Transverse colon (tissue), 4 donors: ENCODE measurements at regions of chr1 and their contacts with region 1.

Region 1: DNA sequence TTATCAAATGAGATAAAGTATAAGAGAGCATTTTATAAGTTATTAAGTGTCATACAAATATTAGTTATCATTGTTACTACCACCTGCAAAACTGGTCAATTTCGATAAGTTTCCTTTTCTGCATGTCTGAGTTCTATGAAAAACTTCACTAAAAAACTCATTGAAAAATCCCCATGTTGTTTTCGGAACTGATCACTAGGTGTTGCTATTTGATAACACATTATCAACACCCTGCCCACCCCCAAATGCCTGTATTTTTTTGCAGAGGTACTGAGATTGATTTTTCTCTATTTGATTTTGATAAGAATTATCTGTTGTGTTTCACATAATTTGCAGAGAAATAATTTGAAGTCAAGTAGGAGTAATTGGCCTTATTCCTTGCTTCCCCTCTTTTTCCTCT is 22.1 kb upstream of the DISP1 start:
- DNase-seq: no peak
- H3K4me3 ChIP-seq: no peak overlapping the region
- H3K27ac ChIP-seq: no peak overlapping the region
- H3K4me1 ChIP-seq: no peaks in the 10 kb centered on the region
- H3K27me3 ChIP-seq: no peaks in the 10 kb centered on the region
- CTCF ChIP-seq: peak; percentile 45 to 56 (median 52)
- EP300 ChIP-seq: no peak
- POLR2A ChIP-seq: no peak

Region 2: DNA sequence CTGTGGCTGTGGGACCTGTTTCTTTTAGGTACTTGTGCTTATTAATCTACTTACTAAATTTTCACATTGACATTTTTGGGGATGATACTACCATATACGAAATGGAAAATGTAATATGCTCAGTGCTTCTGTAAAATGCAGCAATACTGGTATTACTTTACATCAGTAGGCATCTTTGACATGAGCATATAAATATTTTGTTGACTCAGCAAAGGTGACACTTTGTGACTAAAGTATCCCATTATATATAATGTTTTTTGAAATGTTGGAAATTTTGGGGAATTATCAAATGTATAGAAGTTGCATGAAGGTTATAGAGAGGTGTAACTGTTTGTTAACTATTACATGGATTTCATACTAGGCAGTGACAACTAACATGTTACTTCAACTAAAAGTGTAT is 58.0 kb before region 1 on chr1:
- in situ Hi-C with region 1: no loop called
- intact Hi-C with region 1: loop called (anchors 1 kb)
- DNase-seq: no peak
- H3K4me3 ChIP-seq: no peak overlapping the region
- H3K27ac ChIP-seq: no peak overlapping the region
- H3K4me1 ChIP-seq: peaks cover 0 to 8% (median 2%) of the 10 kb centered on the region in 4 donors
- H3K27me3 ChIP-seq: no peaks in the 10 kb centered on the region
- CTCF ChIP-seq: no peak
- EP300 ChIP-seq: no peak
- POLR2A ChIP-seq: no peak

Region 3: DNA sequence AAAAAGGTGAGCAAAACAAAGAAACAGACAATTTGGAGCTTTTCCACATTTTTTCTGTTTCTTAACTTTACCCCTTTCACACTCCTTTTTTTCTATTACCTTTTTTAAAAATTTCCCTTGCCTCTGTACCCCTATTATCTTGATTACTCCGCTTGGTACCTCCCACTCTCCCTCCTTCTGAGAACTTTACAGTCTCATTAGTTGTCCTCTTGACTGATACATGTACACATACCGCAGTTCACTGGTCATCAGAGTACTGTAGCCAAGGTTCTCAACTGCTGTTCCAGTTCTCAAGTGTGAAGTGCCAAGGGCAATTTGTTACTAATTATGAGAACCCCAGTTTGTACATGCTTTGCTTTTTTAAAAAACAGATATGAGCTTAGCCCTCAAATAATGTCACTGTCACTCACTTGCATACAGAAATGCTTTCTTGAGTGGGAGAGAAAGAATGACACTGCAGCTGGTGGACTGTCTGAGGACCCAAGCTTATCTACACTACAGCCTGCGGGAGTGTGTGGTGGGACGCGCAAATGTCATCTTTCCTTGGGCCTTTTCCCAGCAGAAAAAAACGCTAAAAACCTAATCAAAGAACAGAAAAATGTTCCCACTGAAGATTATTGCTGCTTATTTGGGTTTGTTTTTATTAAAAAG is 182.9 kb after region 1 on chr1:
- in situ Hi-C with region 1: no loop called
- intact Hi-C with region 1: no loop called
- DNase-seq: no peak
- H3K4me3 ChIP-seq: no peak overlapping the region
- H3K27ac ChIP-seq: peak overlapping the region; percentile 36 to 67 (median 62)
- H3K4me1 ChIP-seq: peaks cover 0 to 13% (median 0%) of the 10 kb centered on the region in 4 donors
- H3K27me3 ChIP-seq: no peaks in the 10 kb centered on the region
- CTCF ChIP-seq: no peak
- EP300 ChIP-seq: no peak
- POLR2A ChIP-seq: no peak

Region 4: GRCh38 chr1:223081181-223081994 is 288.6 kb after region 1 on chr1:
- in situ Hi-C with region 1: loop called in 2 of 4 experiments (anchors 10 kb)
- intact Hi-C with region 1: loop called (anchors 1 kb)
- DNase-seq: peak; percentile 85
- H3K4me3 ChIP-seq: peak overlapping the region; percentile 17 to 49 (median 25)
- H3K27ac ChIP-seq: peak overlapping the region; percentile 60 to 76 (median 64)
- H3K4me1 ChIP-seq: peaks cover 0 to 12% (median 3%) of the 10 kb centered on the region in 4 donors
- H3K27me3 ChIP-seq: no peaks in the 10 kb centered on the region
- CTCF ChIP-seq: peak; percentile 92 to 97 (median 94)
- EP300 ChIP-seq: no peak
- POLR2A ChIP-seq: no peak

Region 5: GRCh38 chr1:223087291-223088255 is 294.8 kb after region 1 on chr1:
- in situ Hi-C with region 1: loop called (anchors 10 kb)
- intact Hi-C with region 1: no loop called
- DNase-seq: no peak
- H3K4me3 ChIP-seq: no peak overlapping the region
- H3K27ac ChIP-seq: peak overlapping the region; percentile 62 to 87 (median 76)
- H3K4me1 ChIP-seq: peaks cover 0 to 16% (median 7%) of the 10 kb centered on the region in 4 donors
- H3K27me3 ChIP-seq: no peaks in the 10 kb centered on the region
- CTCF ChIP-seq: no peak
- EP300 ChIP-seq: no peak
- POLR2A ChIP-seq: no peak

Region 6: DNA sequence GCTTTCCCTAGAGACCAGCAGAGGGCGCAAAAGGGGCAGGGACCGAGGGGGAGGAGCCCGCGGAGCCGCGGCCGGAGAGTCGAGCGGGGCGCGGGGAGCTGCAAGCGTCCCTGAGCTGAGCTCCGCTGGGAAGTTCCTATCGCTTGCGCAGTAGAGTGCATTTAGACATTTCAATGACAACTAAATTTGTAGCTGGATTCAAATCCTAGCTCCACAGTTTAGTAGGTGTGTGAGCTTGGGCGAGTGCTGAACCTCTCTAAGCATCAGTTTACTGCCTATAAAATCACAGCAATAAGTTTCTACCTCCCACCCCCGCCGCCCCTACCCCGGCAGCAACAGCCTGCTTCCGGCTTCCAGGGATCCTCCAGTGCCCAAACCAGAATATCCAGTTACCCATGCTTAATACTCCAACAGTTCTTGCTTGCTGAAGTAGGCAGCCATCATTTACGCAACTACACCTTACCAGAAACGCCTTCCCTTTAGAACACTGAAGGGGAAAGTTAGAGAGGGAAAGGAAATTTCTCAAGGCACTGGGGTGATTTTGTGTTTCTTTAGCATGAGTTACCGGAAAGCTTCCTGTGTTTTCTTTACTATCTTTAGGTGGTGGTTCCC is 341.2 kb after region 1 on chr1:
- in situ Hi-C with region 1: no loop called
- intact Hi-C with region 1: loop called (anchors 10 kb)
- DNase-seq: peak; percentile 87
- H3K4me3 ChIP-seq: peak overlapping the region; percentile 16 to 47 (median 26)
- H3K27ac ChIP-seq: peak overlapping the region; percentile 60 to 79 (median 74)
- H3K4me1 ChIP-seq: peaks cover 7 to 32% (median 18%) of the 10 kb centered on the region in 4 donors
- H3K27me3 ChIP-seq: no peaks in the 10 kb centered on the region
- CTCF ChIP-seq: peak; percentile 91 to 97 (median 97)
- EP300 ChIP-seq: no peak
- POLR2A ChIP-seq: no peak